ENCODE measurements at regions of chr6 and their contacts with region 1.

Region 1: DNA sequence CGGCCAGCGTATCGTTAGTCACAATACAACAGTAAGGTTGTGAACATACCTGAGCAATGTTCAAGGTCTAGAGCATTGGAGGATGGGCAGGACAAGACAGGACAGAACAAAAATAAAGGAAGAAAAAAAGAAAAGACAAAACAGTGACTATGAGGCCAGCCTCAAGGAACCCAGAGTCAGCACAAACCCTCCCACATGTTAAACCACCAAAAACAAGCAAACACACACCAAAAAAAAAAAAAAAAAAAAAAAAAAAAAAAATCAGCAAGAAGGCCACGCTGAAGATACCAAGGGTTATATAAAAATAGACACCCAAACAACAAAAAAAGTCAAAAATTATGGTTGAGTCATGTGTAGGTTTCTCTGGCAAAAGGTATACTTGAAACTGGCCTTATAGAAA is 12.8 kb downstream of the MED23 start:
- DNase-seq: no peak
- H3K4me3 ChIP-seq: no peak overlapping the region
- H3K4me3 Mint-ChIP-seq: no peak overlapping the region
- H3K27ac ChIP-seq: no peak overlapping the region
- H3K27ac Mint-ChIP-seq: no peak overlapping the region
- H3K4me1 ChIP-seq: no peaks in the 10 kb centered on the region
- H3K4me1 Mint-ChIP-seq: peaks cover 0 to 5% (median under 1%) of the 10 kb centered on the region in 4 donors
- H3K27me3 ChIP-seq: no peaks in the 10 kb centered on the region
- H3K27me3 Mint-ChIP-seq: no peaks in the 10 kb centered on the region

Region 2: DNA sequence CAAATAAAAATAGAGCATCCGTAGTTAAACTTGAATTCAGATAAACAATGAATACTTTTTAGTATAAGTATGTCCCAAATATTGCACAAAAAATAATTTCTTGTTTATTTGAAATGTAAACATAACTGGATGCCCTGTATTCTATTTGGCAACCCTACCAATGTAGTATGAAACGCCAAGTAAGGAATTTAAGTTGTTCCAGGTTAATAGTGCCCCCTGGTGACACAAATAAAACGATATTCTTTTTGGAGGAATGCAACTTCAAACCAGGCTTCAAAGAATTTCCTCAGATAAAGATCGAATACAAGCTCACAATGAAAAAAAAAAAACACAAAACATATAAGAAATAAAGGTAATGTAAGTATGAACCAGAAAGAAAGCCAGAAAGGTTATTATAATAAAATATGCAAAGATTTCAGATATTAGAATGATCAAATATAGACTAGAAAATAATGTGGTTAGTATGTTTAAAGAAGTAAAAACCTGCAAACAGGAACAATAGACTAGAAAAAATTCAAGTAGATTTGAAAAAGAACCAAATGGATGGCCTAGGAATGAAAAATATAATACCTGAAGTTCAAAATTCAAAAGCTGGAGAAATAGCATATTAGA is 498.4 kb before region 1 on chr6:
- CTCF ChIA-PET with region 1: no interaction called
- POLR2A ChIA-PET with region 1: no interaction called
- intact Hi-C with region 1: no loop called
- DNase-seq: peak in 4 of 5 donors; percentile 37 to 51 (median 48)
- H3K4me3 ChIP-seq: no peak overlapping the region
- H3K4me3 Mint-ChIP-seq: no peak overlapping the region
- H3K27ac ChIP-seq: no peak overlapping the region
- H3K27ac Mint-ChIP-seq: no peak overlapping the region
- H3K4me1 ChIP-seq: no peaks in the 10 kb centered on the region
- H3K4me1 Mint-ChIP-seq: no peaks in the 10 kb centered on the region
- H3K27me3 ChIP-seq: no peaks in the 10 kb centered on the region
- H3K27me3 Mint-ChIP-seq: peaks cover 0 to 2% of the 10 kb centered on the region in 2 donors

Region 3: DNA sequence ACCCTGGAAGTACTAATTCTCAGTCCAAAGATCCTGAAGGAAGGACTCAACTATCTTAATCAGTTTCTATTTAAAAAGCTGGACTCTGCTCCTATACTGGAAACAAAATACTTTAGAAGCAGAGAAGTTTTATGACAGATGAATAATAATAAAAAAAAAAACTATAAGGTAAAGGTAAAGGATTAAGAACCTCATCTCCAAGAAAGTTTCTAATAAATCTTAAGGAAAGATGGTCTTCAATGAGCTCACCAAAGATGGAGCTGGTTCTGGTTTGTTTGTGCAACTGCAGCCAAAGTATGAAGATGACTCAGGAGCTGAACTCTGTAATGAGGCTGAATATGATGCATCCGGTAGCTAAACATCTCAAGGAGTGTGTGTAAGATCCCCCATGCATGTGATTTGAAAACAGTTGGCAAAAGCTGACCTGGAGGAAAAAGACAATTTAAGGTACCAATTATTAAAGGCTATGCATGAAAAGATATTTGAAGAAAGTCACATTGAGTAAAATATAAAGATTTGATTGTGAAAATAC is 12.4 kb before region 1 on chr6:
- CTCF ChIA-PET with region 1: interaction called, 12 read pairs
- POLR2A ChIA-PET with region 1: interaction called, 3 read pairs
- intact Hi-C with region 1: no loop called
- DNase-seq: no peak
- H3K4me3 ChIP-seq: no peak overlapping the region
- H3K4me3 Mint-ChIP-seq: peak overlapping the region in 1 of 8 donors; percentile 6
- H3K27ac ChIP-seq: no peak overlapping the region
- H3K27ac Mint-ChIP-seq: no peak overlapping the region
- H3K4me1 ChIP-seq: no peaks in the 10 kb centered on the region
- H3K4me1 Mint-ChIP-seq: peaks cover 0 to 2% (median 0%) of the 10 kb centered on the region in 4 donors
- H3K27me3 ChIP-seq: no peaks in the 10 kb centered on the region
- H3K27me3 Mint-ChIP-seq: no peaks in the 10 kb centered on the region

Region 4: DNA sequence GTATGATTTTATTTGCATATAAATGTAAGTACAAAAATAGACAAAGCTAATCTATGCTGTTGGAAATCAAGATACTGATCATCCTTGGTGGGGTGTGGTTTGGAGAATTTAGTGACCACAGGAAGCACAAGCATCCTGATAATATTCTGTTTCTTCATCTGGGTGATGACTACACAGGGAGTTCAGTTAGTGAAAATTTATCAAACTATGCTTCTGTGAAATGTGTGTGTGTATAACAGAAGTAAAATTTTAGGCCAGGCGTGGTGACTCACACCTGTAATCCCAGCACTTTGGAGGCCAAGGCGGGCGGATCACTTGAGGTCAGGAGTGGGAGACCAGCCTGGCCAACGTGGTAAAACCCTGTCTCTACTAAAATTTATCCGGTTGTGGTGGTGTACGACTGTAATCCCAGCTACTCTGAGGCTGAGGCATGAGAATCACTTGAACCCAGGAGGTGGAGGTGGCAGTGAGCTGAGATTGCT is 42.4 kb after region 1 on chr6:
- CTCF ChIA-PET with region 1: no interaction called
- POLR2A ChIA-PET with region 1: no interaction called
- intact Hi-C with region 1: no loop called
- DNase-seq: no peak
- H3K4me3 ChIP-seq: no peak overlapping the region
- H3K4me3 Mint-ChIP-seq: no peak overlapping the region
- H3K27ac ChIP-seq: no peak overlapping the region
- H3K27ac Mint-ChIP-seq: no peak overlapping the region
- H3K4me1 ChIP-seq: no peaks in the 10 kb centered on the region
- H3K4me1 Mint-ChIP-seq: no peaks in the 10 kb centered on the region
- H3K27me3 ChIP-seq: no peaks in the 10 kb centered on the region
- H3K27me3 Mint-ChIP-seq: peaks cover 0 to 3% of the 10 kb centered on the region in 2 donors

Region 5: DNA sequence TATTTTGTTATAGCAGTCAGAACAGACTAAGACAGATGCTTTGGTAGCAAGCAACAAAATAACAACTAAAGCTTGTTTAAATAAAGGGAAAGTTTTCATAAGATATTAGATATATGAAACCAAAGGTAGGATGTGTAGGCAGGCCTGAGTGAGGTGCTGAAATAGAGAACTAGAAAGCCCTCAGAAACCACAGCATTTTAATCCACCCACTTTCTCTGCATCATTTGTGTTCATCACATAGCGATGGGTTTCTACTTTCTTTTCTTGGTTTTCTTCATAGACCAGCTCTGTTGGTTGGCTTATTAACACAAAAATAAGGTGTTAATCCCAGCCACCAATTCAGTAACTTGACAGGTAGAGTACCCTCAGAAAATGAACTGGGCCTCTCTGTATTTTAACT is 1257.6 kb after region 1 on chr6:
- CTCF ChIA-PET with region 1: no interaction called
- POLR2A ChIA-PET with region 1: no interaction called
- intact Hi-C with region 1: no loop called
- DNase-seq: no peak
- H3K4me3 ChIP-seq: no peak overlapping the region
- H3K4me3 Mint-ChIP-seq: no peak overlapping the region
- H3K27ac ChIP-seq: no peak overlapping the region
- H3K27ac Mint-ChIP-seq: no peak overlapping the region
- H3K4me1 ChIP-seq: no peaks in the 10 kb centered on the region
- H3K4me1 Mint-ChIP-seq: no peaks in the 10 kb centered on the region
- H3K27me3 ChIP-seq: no peaks in the 10 kb centered on the region
- H3K27me3 Mint-ChIP-seq: peaks cover under 1 to 4% of the 10 kb centered on the region in 2 donors

Measured in CD4-positive, alpha-beta memory T cell (primary cell).